CD4-positive, alpha-beta memory T cell (primary cell): ENCODE measurements at regions of chr2 and their contacts with region 1.

Region 1: DNA sequence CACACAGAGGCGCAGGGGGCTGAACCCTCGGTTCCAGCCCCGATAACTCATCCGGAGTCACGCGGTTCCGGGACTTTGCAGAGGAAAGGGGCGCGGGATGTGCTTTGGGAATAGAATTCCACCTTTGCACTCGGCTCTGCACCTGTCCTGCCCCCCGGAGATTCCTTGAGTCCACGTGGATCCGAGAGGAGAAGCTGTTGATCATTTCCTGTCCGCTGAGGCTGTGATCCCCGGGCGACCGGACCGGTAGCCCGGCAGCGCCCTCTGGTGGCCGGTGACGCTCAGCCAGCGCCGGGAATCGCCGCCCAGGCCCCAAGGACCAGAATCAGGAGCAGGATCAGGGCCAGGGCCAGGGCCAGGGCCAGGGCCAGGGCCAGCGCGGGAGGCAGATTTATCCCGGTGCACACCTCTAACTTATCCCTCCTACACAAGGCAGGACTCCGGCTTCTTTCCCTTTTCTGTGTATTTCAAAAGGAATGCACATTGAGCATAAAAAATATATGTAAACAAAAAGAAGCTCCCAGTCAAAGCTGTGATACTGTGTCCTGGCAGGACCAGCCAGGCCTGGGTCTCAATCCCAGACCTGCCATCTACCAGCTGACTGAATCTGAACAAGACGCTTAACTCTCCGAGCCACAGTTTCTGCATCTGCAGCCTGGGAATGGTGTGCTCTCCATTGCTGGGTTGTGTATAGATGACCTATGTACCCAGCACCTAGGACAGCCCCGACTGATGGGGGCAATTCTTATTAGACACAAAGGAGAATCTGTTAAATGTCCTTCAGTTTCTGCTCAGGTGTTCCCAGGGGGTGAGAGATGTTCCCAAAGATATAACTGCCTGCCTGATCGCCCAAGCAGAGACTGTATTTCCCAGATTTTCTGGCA is 8.5 kb upstream of the SPATA3 start:
- DNase-seq: peak; percentile 60 to 74 (median 69)
- H3K4me3 ChIP-seq: peak overlapping the region in 1 of 2 donors; percentile 63
- H3K4me3 Mint-ChIP-seq: peak overlapping the region; percentile 52 to 73 (median 63)
- H3K27ac ChIP-seq: no peak overlapping the region
- H3K27ac Mint-ChIP-seq: peak overlapping the region in 2 of 7 donors; percentile 41 to 74
- H3K4me1 ChIP-seq: peaks cover 17% of the 10 kb centered on the region
- H3K4me1 Mint-ChIP-seq: peaks cover 4 to 21% (median 14%) of the 10 kb centered on the region in 4 donors
- H3K27me3 ChIP-seq: no peaks in the 10 kb centered on the region
- H3K27me3 Mint-ChIP-seq: peaks cover 5 to 11% of the 10 kb centered on the region in 2 donors

Region 2: DNA sequence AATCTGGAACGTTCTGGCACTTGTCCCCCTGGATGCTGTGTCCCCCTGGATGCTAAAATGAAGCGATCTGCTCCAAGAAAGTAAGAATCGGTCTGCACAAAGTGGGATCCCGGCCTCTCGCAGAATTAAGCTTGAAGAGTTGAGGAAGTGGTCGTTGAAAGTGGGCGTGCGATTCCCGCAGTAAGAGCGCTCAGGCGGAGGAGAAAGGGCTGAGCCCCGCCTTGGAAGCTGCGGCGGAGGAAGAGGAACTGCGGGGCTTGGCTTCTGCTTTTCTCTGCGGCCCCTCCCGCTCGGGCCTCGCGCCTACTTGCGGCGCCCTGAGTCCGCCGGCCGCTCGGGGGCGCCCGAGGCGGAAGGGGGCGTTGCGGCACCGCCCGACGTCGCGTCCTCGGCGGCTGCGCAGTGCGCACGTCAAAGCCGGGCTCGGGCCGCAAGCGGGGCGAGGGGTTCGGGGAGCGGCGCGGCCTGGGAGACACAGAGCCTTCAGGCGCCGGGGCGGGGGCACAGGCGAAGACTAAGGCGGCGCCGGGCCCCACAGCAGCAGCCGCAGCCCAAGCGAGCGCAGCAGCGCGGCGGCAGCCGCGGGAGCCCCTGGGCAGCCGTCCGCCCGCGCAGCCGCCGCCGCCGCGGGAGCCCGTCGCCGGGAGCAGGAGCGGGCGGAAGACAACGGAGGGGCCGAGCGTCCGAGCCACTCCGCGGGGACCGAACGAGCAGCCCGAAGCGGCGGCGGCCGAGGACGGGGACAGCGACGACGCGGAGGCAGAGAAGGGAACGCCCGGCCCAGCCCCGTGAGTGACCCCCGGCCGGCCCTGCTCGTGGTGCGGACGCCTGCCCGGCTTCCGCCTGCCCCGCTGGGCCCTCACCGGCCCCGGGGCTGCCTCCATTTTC is 274.7 kb before region 1 on chr2 and contains the start of gene CAB39:
- CTCF ChIA-PET with region 1: no interaction called
- POLR2A ChIA-PET with region 1: no interaction called
- intact Hi-C with region 1: no loop called
- DNase-seq: peak; percentile 83 to 91 (median 89)
- H3K4me3 ChIP-seq: peak within 1 kb of the TSS; percentile 86 to 94
- H3K4me3 Mint-ChIP-seq: peak within 1 kb of the TSS; percentile 95 to 99 (median 96)
- H3K27ac ChIP-seq: peak within 1 kb of the TSS; percentile 80
- H3K27ac Mint-ChIP-seq: peak within 1 kb of the TSS; percentile 92 to 99 (median 96)
- H3K4me1 ChIP-seq: peaks cover 37% of the 10 kb centered on the region
- H3K4me1 Mint-ChIP-seq: peaks cover 23 to 49% (median 38%) of the 10 kb centered on the region in 4 donors
- H3K27me3 ChIP-seq: no peaks in the 10 kb centered on the region
- H3K27me3 Mint-ChIP-seq: no peaks in the 10 kb centered on the region
- total RNA-seq, gene CAB39: 112 to 115 TPM

Region 3: GRCh38 chr2:230824406-230824978 is 162.9 kb before region 1 on chr2:
- CTCF ChIA-PET with region 1: interaction called, 53 read pairs
- POLR2A ChIA-PET with region 1: interaction called, 7 read pairs
- intact Hi-C with region 1: loop called (anchors 1 kb)
- DNase-seq: peak; percentile 60 to 74 (median 71)
- H3K4me3 ChIP-seq: no peak overlapping the region
- H3K4me3 Mint-ChIP-seq: peak overlapping the region in 7 of 8 donors; percentile 35 to 69 (median 60)
- H3K27ac ChIP-seq: no peak overlapping the region
- H3K27ac Mint-ChIP-seq: peak overlapping the region in 1 of 7 donors; percentile 68
- H3K4me1 ChIP-seq: peaks cover 16% of the 10 kb centered on the region
- H3K4me1 Mint-ChIP-seq: peaks cover 2 to 13% (median 8%) of the 10 kb centered on the region in 4 donors
- H3K27me3 ChIP-seq: no peaks in the 10 kb centered on the region
- H3K27me3 Mint-ChIP-seq: peaks cover 22 to 23% of the 10 kb centered on the region in 2 donors

Region 4: GRCh38 chr2:230893841-230894781 is 93.3 kb before region 1 on chr2:
- CTCF ChIA-PET with region 1: interaction called, 256 read pairs
- POLR2A ChIA-PET with region 1: interaction called, 3 read pairs
- intact Hi-C with region 1: no loop called
- DNase-seq: no peak
- H3K4me3 ChIP-seq: no peak overlapping the region
- H3K4me3 Mint-ChIP-seq: no peak overlapping the region
- H3K27ac ChIP-seq: no peak overlapping the region
- H3K27ac Mint-ChIP-seq: no peak overlapping the region
- H3K4me1 ChIP-seq: peaks cover 7% of the 10 kb centered on the region
- H3K4me1 Mint-ChIP-seq: peaks cover 3 to 5% (median 4%) of the 10 kb centered on the region in 4 donors
- H3K27me3 ChIP-seq: no peaks in the 10 kb centered on the region
- H3K27me3 Mint-ChIP-seq: peaks cover 15% of the 10 kb centered on the region in 2 donors

Region 5: GRCh38 chr2:230913406-230914143 is 73.8 kb before region 1 on chr2:
- CTCF ChIA-PET with region 1: interaction called, 256 read pairs
- POLR2A ChIA-PET with region 1: interaction called, 3 read pairs
- intact Hi-C with region 1: no loop called
- DNase-seq: peak in 1 of 5 donors; percentile 9
- H3K4me3 ChIP-seq: no peak overlapping the region
- H3K4me3 Mint-ChIP-seq: no peak overlapping the region
- H3K27ac ChIP-seq: no peak overlapping the region
- H3K27ac Mint-ChIP-seq: no peak overlapping the region
- H3K4me1 ChIP-seq: no peaks in the 10 kb centered on the region
- H3K4me1 Mint-ChIP-seq: peaks cover 2 to 14% (median 10%) of the 10 kb centered on the region in 4 donors
- H3K27me3 ChIP-seq: no peaks in the 10 kb centered on the region
- H3K27me3 Mint-ChIP-seq: peaks cover 1 to 5% of the 10 kb centered on the region in 2 donors

Region 6: DNA sequence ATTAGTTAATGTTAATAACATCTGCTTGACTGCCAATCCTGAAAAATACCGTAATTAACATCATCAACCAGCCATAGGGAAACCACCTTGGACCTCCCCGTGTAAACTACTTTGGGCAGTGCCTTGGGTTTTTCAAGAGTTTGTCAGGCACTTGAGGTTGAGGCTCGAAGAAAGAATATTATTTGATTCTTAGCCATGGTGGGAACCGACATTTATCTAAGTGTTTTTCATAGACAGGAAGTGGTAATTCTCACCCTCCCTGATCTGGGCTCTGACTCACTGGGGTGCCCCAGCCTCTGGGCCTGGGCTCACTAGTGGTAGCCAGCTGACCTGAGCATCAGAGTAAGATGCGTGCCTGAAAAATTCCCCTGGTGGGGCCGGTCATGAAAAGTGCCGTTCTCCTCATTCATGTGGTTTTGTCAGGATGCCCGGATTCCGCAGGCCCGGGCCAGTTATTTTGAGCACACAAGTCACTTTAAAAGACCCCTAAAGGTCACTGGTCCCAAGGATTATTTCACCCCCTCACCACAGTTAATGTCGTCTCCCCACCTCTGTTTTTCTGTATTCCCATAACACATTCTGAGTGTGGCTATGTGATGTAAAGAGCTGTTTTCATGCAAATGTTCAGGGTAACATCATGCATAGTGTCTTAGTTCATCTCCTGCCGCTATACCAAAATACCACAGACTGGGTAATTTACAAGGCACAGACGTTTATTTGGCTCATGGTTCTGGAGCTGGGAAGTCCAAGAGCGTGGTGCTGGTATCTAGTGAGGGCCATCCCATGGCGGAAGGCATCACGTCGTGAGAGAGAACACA is 13.1 kb before region 1 on chr2:
- CTCF ChIA-PET with region 1: interaction called, 24 read pairs
- POLR2A ChIA-PET with region 1: interaction called, 7 read pairs
- intact Hi-C with region 1: no loop called
- DNase-seq: peak; percentile 69 to 90 (median 72)
- H3K4me3 ChIP-seq: peak overlapping the region in 1 of 2 donors; percentile 25
- H3K4me3 Mint-ChIP-seq: peak overlapping the region; percentile 40 to 75 (median 64)
- H3K27ac ChIP-seq: peak overlapping the region; percentile 73
- H3K27ac Mint-ChIP-seq: peak overlapping the region; percentile 78 to 99 (median 93)
- H3K4me1 ChIP-seq: peaks cover 33% of the 10 kb centered on the region
- H3K4me1 Mint-ChIP-seq: peaks cover 35 to 65% (median 47%) of the 10 kb centered on the region in 4 donors
- H3K27me3 ChIP-seq: no peaks in the 10 kb centered on the region
- H3K27me3 Mint-ChIP-seq: no peaks in the 10 kb centered on the region

Region 7: GRCh38 chr2:231110551-231110950 is 123.2 kb after region 1 on chr2:
- CTCF ChIA-PET with region 1: no interaction called
- POLR2A ChIA-PET with region 1: no interaction called
- intact Hi-C with region 1: no loop called
- DNase-seq: no peak
- H3K4me3 ChIP-seq: no peak overlapping the region
- H3K4me3 Mint-ChIP-seq: no peak overlapping the region
- H3K27ac ChIP-seq: no peak overlapping the region
- H3K27ac Mint-ChIP-seq: no peak overlapping the region
- H3K4me1 ChIP-seq: no peaks in the 10 kb centered on the region
- H3K4me1 Mint-ChIP-seq: no peaks in the 10 kb centered on the region
- H3K27me3 ChIP-seq: no peaks in the 10 kb centered on the region
- H3K27me3 Mint-ChIP-seq: no peaks in the 10 kb centered on the region

Region 8: GRCh38 chr2:231545105-231545902 is 557.9 kb after region 1 on chr2:
- CTCF ChIA-PET with region 1: no interaction called
- POLR2A ChIA-PET with region 1: no interaction called
- intact Hi-C with region 1: no loop called
- DNase-seq: peak; percentile 21 to 49 (median 36)
- H3K4me3 ChIP-seq: peak overlapping the region; percentile 39 to 40
- H3K4me3 Mint-ChIP-seq: peak overlapping the region; percentile 57 to 88 (median 72)
- H3K27ac ChIP-seq: peak overlapping the region; percentile 51
- H3K27ac Mint-ChIP-seq: peak overlapping the region; percentile 68 to 94 (median 89)
- H3K4me1 ChIP-seq: peaks cover 22% of the 10 kb centered on the region
- H3K4me1 Mint-ChIP-seq: peaks cover 25 to 58% (median 39%) of the 10 kb centered on the region in 4 donors
- H3K27me3 ChIP-seq: no peaks in the 10 kb centered on the region
- H3K27me3 Mint-ChIP-seq: no peaks in the 10 kb centered on the region

Region 9: DNA sequence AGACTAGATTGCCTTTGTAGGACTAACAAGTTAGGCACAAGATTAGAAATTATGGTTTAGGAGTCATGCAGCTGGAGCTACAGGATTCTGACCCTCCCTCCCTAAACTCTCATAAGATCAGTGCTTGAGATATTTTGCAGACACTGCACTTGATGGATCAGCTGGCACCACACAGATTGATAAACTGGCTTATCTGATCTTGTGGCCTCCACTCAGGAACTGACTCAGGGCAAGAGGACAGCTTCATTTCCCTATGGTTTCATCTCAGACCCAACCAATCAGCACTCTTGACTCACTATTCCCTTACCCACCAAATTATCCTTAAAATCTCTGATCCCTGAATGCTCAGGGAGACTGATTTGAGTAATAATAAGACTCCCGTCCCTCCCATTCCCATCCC is 1126.4 kb after region 1 on chr2:
- CTCF ChIA-PET with region 1: no interaction called
- POLR2A ChIA-PET with region 1: no interaction called
- intact Hi-C with region 1: no loop called
- DNase-seq: peak in 1 of 5 donors; percentile 4
- H3K4me3 ChIP-seq: no peak overlapping the region
- H3K4me3 Mint-ChIP-seq: peak overlapping the region in 1 of 8 donors; percentile 14
- H3K27ac ChIP-seq: no peak overlapping the region
- H3K27ac Mint-ChIP-seq: no peak overlapping the region
- H3K4me1 ChIP-seq: peaks cover 18% of the 10 kb centered on the region
- H3K4me1 Mint-ChIP-seq: peaks cover 20 to 35% (median 23%) of the 10 kb centered on the region in 4 donors
- H3K27me3 ChIP-seq: no peaks in the 10 kb centered on the region
- H3K27me3 Mint-ChIP-seq: no peaks in the 10 kb centered on the region